Ovary (tissue), 10 donors: ENCODE measurements at regions of chr5 and their contacts with region 1.

Region 1: DNA sequence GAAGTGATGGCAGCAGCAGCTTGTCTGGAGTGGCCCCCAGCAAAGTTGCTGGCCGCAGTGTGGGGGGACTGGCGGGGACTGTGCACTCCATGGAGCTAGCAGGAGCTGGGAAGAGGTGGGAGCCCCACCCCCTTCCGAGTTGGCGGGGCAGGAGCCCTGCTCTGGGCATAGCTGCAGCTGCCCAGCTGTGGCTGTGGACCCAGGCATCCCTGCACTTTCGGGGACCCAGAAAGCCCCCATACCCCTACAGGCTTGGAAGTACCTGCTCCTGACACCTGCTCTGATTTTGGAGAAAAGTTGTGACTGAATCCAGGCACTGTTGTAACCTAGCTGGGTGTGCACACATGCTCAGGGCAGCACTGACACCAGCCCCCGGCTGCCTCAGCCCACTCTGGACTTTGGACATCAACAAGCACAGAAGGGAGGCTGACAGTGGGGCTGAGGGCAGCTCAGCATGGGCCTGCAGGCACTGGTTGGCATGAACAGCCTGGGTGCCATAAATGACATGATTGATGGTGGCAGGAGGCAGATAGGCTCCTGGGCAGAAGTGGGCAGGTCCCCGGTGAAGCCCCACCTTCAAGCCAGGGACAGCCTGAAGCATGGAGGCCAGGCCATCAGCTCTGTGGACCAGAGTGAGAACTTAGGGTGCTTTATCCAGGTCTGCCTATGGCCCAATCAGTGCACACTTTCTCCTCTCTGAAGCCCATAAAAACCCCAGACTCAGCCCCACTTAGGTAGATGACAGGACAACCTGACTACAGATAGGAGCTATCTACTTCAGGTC is 12.6 kb downstream of the LMBRD2 start:
- DNase-seq: no peak
- H3K4me3 ChIP-seq: no peak overlapping the region
- H3K27ac ChIP-seq: no peak overlapping the region
- H3K4me1 ChIP-seq: no peaks in the 10 kb centered on the region
- H3K27me3 ChIP-seq: no peaks in the 10 kb centered on the region
- CTCF ChIP-seq: no peak
- EP300 ChIP-seq: no peak
- POLR2A ChIP-seq: no peak

Region 2: DNA sequence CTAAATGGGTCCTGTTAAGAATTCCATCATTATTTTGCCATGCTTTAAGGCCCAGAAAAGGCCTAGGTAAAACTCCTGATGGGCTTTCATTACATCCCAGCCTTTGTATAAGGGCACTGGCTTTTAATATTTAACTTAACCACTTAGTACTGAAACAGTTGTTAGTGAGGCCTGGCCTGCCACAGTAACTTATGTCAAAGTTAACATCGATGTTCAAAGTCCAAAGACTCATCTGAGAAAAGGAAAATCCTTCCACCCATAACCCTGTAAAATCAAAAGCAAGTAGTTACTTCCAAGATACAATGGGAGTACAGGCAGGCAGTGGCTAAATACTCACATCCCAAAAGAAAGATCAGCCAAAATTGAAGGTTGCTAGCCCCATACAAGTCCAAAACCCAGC is 132.9 kb before region 1 on chr5:
- intact Hi-C with region 1: no loop called
- DNase-seq: no peak
- H3K4me3 ChIP-seq: no peak overlapping the region
- H3K27ac ChIP-seq: no peak overlapping the region
- H3K4me1 ChIP-seq: no peaks in the 10 kb centered on the region
- H3K27me3 ChIP-seq: no peaks in the 10 kb centered on the region
- CTCF ChIP-seq: no peak
- EP300 ChIP-seq: no peak
- POLR2A ChIP-seq: no peak

Region 3: DNA sequence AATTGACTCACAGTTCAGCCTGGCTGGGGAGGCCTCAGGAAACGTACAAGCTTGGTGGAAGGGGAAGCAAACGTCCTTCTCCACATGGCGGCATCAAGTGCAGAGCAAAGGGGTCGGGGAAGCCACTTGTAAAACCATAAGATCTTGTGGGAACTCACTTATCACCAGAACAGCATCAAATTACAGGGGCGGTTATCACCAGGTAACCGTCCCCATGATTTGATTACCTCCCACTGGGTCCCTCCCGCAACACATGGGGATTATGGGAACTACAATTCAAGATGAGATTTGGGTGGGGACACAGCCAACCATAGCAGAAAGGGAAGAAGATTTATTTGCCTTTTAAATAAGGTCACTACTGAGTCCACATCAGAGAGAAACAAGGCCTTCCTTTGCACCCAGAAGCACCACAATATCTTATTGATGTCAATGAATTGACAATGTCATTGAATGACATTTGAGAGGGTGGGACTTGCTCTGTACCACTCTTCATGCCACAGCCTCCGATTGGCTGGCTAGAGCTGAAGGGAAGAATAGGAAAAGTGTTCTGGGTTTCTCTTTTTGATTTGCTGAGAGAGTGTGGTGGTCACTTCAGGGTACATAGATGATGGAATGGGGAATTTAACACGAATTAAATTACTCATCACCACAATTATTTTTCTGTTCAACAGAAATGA is 23.9 kb after region 1 on chr5:
- intact Hi-C with region 1: loop called in 1 of 4 experiments (anchors 1 kb)
- DNase-seq: no peak
- H3K4me3 ChIP-seq: no peak overlapping the region
- H3K27ac ChIP-seq: no peak overlapping the region
- H3K4me1 ChIP-seq: no peaks in the 10 kb centered on the region
- H3K27me3 ChIP-seq: no peaks in the 10 kb centered on the region
- CTCF ChIP-seq: no peak
- EP300 ChIP-seq: no peak
- POLR2A ChIP-seq: no peak